ENCODE measurements at regions of chr3 and their contacts with region 1.

Region 1: GRCh38 chr3:32821686-32822296 is 4.0 kb downstream of the TRIM71 start:
- DNase-seq: peak in 1 of 2 experiments; percentile 50
- H3K4me3 ChIP-seq: peak overlapping the region; percentile 78
- H3K4me3 Mint-ChIP-seq: peak overlapping the region; percentile 86
- H3K27ac Mint-ChIP-seq: peak overlapping the region; percentile 7
- H3K4me1 ChIP-seq: peaks cover 48% of the 10 kb centered on the region
- H3K4me1 Mint-ChIP-seq: peaks cover 17% of the 10 kb centered on the region
- H3K27me3 ChIP-seq: no peaks in the 10 kb centered on the region
- H3K27me3 Mint-ChIP-seq: no peaks in the 10 kb centered on the region
- CTCF ChIP-seq: no peak

Region 2: DNA sequence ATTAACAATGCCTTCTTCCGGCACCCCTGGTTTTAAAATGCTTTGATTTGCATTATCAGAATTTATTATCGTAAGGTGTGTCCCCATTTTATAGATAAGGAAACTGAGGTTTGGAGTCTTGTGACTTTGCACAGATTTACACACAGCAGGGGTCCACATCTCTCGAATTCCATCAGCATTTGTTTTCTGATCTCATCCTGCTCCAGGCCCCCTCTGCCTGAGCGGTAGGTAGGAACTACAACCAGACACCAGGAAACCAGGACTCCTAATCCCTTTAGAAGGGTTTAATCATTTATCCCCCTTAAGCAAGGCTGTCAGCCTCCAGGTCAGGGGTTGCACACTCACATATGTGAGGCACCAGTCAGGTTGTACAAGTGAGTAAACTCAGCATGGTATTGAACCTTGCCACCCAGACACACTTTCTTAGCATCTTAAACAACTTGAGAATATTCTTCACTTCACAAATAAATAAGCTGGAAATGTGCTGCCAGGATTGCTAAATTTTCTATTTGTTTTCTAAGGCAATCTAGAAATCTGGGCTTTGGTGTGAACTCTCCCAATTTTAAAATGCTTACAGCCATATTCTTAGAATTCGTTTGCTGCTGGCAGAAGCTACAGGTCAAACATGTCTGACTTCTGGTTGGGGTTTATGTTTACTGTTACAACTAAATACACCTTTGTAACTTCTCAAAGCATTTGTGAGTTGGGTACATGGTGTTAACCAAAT is 461.9 kb before region 1 on chr3:
- CTCF ChIA-PET with region 1: no interaction called
- POLR2A ChIA-PET with region 1: no interaction called
- intact Hi-C with region 1: no loop called
- DNase-seq: peak; percentile 50 to 66
- H3K4me3 ChIP-seq: no peak overlapping the region
- H3K4me3 Mint-ChIP-seq: peak overlapping the region; percentile 27
- H3K27ac Mint-ChIP-seq: peak overlapping the region; percentile 34
- H3K4me1 ChIP-seq: peaks cover 50% of the 10 kb centered on the region
- H3K4me1 Mint-ChIP-seq: peaks cover 32% of the 10 kb centered on the region
- H3K27me3 ChIP-seq: no peaks in the 10 kb centered on the region
- H3K27me3 Mint-ChIP-seq: no peaks in the 10 kb centered on the region
- CTCF ChIP-seq: no peak

Region 3: DNA sequence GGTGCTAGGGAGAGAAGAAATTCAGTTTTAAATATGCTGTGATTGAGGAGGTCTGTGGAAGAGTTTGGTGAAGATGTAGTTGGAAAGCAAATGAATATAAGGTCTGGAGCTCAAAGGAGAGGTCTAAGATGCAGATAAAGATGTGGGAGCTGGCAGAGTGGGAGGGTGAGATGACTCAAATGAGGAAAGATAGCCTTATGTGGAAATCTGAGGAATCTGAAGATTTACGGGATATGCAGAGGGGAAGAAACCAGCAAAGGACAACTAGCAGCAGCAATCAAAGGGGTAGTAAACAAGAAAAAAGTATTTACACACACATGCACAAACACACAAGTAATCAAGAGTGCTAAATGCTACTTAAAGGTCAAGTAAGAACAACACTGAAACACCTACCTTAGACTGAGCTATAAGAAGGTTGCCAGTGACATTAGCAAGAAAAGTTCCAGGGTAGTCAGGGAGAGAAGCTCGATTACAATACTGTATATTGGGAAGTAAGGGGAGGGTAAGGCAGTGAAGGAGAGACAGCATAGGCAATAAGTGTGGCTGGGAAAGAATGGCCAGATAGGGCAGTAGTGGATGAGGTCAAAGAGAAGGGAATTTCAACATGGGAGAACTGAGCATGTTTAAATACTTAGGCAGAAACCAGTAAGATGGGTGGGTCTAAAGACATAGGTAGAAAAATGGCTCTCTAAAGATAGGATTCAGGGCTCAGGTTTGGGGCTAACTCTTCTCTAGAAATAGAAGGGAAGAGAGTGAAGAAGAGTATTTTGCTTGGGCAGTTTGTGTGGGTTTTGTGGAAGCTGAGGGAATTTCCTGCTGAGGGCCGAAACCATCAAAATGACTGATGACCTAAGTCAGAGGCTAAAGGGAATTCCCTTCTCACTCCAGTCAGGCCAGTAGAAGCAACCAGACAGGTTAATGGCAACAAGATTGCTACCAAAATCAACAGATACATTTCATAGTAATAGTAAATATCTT is 328.1 kb before region 1 on chr3:
- CTCF ChIA-PET with region 1: no interaction called
- POLR2A ChIA-PET with region 1: no interaction called
- intact Hi-C with region 1: no loop called
- DNase-seq: no peak
- H3K4me3 ChIP-seq: no peak overlapping the region
- H3K4me3 Mint-ChIP-seq: no peak overlapping the region
- H3K27ac Mint-ChIP-seq: no peak overlapping the region
- H3K4me1 ChIP-seq: peaks cover 43% of the 10 kb centered on the region
- H3K4me1 Mint-ChIP-seq: peaks cover 15% of the 10 kb centered on the region
- H3K27me3 ChIP-seq: no peaks in the 10 kb centered on the region
- H3K27me3 Mint-ChIP-seq: no peaks in the 10 kb centered on the region
- CTCF ChIP-seq: no peak

Region 4: DNA sequence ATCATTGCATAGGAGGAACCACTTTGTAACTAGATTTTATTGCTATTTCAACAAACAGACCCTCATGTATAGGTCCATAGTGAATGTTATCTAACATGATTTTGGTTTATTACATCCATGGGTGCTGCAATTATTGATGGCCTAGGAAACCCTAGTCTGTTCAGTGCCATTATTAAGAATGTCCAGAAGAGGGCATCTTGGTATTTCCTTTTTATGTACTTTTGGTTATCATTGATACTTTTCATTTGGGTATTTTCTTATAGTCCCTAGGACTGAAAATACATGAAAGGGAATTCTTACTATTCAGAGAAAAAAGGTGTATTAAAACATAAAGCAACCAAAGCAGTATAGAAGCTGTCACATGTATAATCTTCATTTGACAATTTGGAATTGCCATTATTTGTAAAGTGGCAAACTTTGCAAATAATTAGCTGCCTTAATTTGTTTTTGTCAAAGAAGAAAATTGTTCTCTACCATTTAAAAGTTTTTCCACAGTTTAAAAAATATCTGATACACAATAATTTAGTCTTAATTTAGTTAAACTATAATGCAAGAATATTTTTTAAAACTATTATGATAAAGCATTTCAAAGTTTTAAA is 88.1 kb before region 1 on chr3:
- CTCF ChIA-PET with region 1: no interaction called
- POLR2A ChIA-PET with region 1: no interaction called
- intact Hi-C with region 1: no loop called
- DNase-seq: peak in 1 of 2 experiments; percentile 39
- H3K4me3 ChIP-seq: no peak overlapping the region
- H3K4me3 Mint-ChIP-seq: no peak overlapping the region
- H3K27ac Mint-ChIP-seq: no peak overlapping the region
- H3K4me1 ChIP-seq: no peaks in the 10 kb centered on the region
- H3K4me1 Mint-ChIP-seq: no peaks in the 10 kb centered on the region
- H3K27me3 ChIP-seq: no peaks in the 10 kb centered on the region
- H3K27me3 Mint-ChIP-seq: no peaks in the 10 kb centered on the region
- CTCF ChIP-seq: peak; percentile 47 to 52

Region 5: DNA sequence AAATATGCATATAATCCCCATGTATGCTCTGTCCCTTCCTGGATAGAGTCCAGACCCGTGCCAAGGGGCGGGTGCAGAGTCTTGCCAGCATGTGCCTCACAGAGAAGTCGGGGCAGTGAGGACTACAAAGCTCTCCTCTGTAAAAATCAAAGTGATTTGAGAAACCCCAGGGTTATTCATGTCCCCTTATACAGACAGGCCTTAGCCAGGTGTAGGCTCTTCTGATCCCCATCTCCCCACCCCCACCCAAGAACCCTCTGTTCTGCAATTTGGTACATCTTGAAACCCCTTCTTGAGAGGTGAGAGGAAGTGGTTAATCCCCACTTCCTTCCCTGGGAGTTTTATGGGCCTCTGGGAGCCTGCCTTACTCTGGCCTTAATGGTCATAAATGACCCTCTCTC is 20.7 kb after region 1 on chr3:
- CTCF ChIA-PET with region 1: interaction called, 3 read pairs
- POLR2A ChIA-PET with region 1: no interaction called
- intact Hi-C with region 1: loop called (anchors 1 kb)
- DNase-seq: no peak
- H3K4me3 ChIP-seq: no peak overlapping the region
- H3K4me3 Mint-ChIP-seq: peak overlapping the region; percentile 24
- H3K27ac Mint-ChIP-seq: peak overlapping the region; percentile 50
- H3K4me1 ChIP-seq: peaks cover 81% of the 10 kb centered on the region
- H3K4me1 Mint-ChIP-seq: peaks cover 43% of the 10 kb centered on the region
- H3K27me3 ChIP-seq: no peaks in the 10 kb centered on the region
- H3K27me3 Mint-ChIP-seq: no peaks in the 10 kb centered on the region
- CTCF ChIP-seq: no peak

Region 6: GRCh38 chr3:32856355-32856889 is 34.6 kb after region 1 on chr3:
- CTCF ChIA-PET with region 1: no interaction called
- POLR2A ChIA-PET with region 1: no interaction called
- intact Hi-C with region 1: loop called (anchors 5 kb)
- DNase-seq: no peak
- H3K4me3 ChIP-seq: no peak overlapping the region
- H3K4me3 Mint-ChIP-seq: peak overlapping the region; percentile 20
- H3K27ac Mint-ChIP-seq: peak overlapping the region; percentile 72
- H3K4me1 ChIP-seq: peaks cover 50% of the 10 kb centered on the region
- H3K4me1 Mint-ChIP-seq: peaks cover 37% of the 10 kb centered on the region
- H3K27me3 ChIP-seq: no peaks in the 10 kb centered on the region
- H3K27me3 Mint-ChIP-seq: no peaks in the 10 kb centered on the region
- CTCF ChIP-seq: no peak

Region 7: GRCh38 chr3:32890420-32891276 is 68.9 kb after region 1 on chr3:
- CTCF ChIA-PET with region 1: no interaction called
- POLR2A ChIA-PET with region 1: no interaction called
- intact Hi-C with region 1: loop called (anchors 1 kb)
- DNase-seq: no peak
- H3K4me3 ChIP-seq: no peak overlapping the region
- H3K4me3 Mint-ChIP-seq: no peak overlapping the region
- H3K27ac Mint-ChIP-seq: no peak overlapping the region
- H3K4me1 ChIP-seq: no peaks in the 10 kb centered on the region; the same call in 1 of the 2 replicates
- H3K4me1 Mint-ChIP-seq: peaks cover 9% of the 10 kb centered on the region
- H3K27me3 ChIP-seq: no peaks in the 10 kb centered on the region
- H3K27me3 Mint-ChIP-seq: no peaks in the 10 kb centered on the region
- CTCF ChIP-seq: no peak

Region 8: GRCh38 chr3:33525232-33525631 is 703.4 kb after region 1 on chr3:
- CTCF ChIA-PET with region 1: no interaction called
- POLR2A ChIA-PET with region 1: no interaction called
- intact Hi-C with region 1: no loop called
- DNase-seq: no peak
- H3K4me3 ChIP-seq: no peak overlapping the region
- H3K4me3 Mint-ChIP-seq: no peak overlapping the region
- H3K27ac Mint-ChIP-seq: peak overlapping the region; percentile 53
- H3K4me1 ChIP-seq: no peaks in the 10 kb centered on the region
- H3K4me1 Mint-ChIP-seq: peaks cover 8% of the 10 kb centered on the region
- H3K27me3 ChIP-seq: no peaks in the 10 kb centered on the region
- H3K27me3 Mint-ChIP-seq: no peaks in the 10 kb centered on the region
- CTCF ChIP-seq: no peak